Sigmoid colon (tissue), 7 donors: ENCODE measurements at regions of chr16 and their contacts with region 1.

Region 1: DNA sequence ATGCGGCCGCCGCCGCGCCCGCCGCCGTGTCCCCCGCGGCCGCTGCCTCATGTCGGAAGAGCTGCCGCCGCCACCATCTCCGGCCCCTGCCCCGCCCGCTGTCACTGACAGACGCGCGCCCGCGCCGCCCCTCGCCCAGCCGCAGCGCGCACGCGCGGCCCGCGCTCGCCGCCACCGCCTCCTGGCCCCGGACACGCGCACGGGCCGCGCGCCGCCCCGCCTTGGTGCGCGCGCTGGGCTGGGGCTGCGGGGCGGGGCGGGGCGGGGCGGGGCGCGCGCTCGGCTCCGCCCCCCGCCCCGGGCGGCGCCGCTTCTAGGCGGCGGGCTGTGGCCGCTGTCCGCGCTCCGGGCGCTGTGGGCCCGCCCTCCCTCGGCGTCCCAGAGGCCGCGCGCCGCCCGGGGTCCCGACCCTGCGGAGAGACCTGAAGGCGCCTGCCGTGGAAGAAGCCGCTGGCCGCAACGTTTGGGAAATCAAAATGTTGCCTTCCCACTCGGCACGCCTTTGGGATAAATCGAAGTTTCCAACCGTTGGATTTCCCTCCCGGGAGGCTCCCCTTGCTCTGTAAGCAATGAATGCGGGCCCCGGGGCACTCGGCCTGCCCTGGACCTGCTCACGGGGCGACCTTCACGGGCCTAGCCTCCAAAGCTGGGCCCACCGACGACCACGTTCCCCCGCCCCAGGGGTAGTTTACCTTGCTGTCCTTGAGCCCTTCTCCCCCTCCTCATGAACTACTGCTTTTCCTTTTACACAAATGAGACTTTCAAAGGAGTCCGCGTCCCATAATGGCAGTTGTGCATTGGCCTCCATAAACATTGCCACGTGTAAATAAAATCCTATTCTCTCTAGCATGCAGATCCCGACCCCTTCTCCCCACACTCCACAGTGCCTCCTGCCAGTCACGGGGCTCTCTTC is at the start of gene ADCY9:
- DNase-seq: peak; percentile 85
- H3K4me3 ChIP-seq: peak within 1 kb of the TSS; percentile 53 to 75 (median 63)
- H3K27ac ChIP-seq: peak within 1 kb of the TSS; percentile 78 to 88 (median 84)
- H3K4me1 ChIP-seq: peaks cover 0 to 43% (median 40%) of the 10 kb centered on the region in 4 donors
- H3K27me3 ChIP-seq: no peaks in the 10 kb centered on the region
- CTCF ChIP-seq: no peak
- EP300 ChIP-seq: no peak
- POLR2A ChIP-seq: no peak
- total RNA-seq, gene ADCY9: 12.5 to 28.0 (median 13.8) TPM

Region 2: GRCh38 chr16:3690470-3690928 is 426.1 kb before region 1 on chr16:
- intact Hi-C with region 1: loop called (anchors 5 kb)
- DNase-seq: peak; percentile 98
- H3K4me3 ChIP-seq: peak overlapping the region in 3 of 4 donors; percentile 35 to 44 (median 37)
- H3K27ac ChIP-seq: peak overlapping the region; percentile 57 to 77 (median 72)
- H3K4me1 ChIP-seq: peaks cover 0 to 17% (median 14%) of the 10 kb centered on the region in 4 donors
- H3K27me3 ChIP-seq: no peaks in the 10 kb centered on the region
- CTCF ChIP-seq: peak; percentile 88 to 95 (median 91)
- EP300 ChIP-seq: no peak
- POLR2A ChIP-seq: no peak

Region 3: GRCh38 chr16:3983081-3983520 is 133.5 kb before region 1 on chr16:
- intact Hi-C with region 1: loop called (anchors 2 kb)
- DNase-seq: peak; percentile 85
- H3K4me3 ChIP-seq: no peak overlapping the region
- H3K27ac ChIP-seq: no peak overlapping the region
- H3K4me1 ChIP-seq: peaks cover 0 to 21% (median 18%) of the 10 kb centered on the region in 4 donors
- H3K27me3 ChIP-seq: no peaks in the 10 kb centered on the region
- CTCF ChIP-seq: peak; percentile 53 to 73 (median 66)
- EP300 ChIP-seq: no peak
- POLR2A ChIP-seq: no peak

Region 4: GRCh38 chr16:4006397-4006999 is 110.1 kb before region 1 on chr16:
- intact Hi-C with region 1: loop called (anchors 5 kb)
- DNase-seq: no peak
- H3K4me3 ChIP-seq: peak overlapping the region in 3 of 4 donors; percentile 4 to 31 (median 28)
- H3K27ac ChIP-seq: peak overlapping the region in 3 of 4 donors; percentile 23 to 68 (median 67)
- H3K4me1 ChIP-seq: peaks cover 0 to 25% (median 16%) of the 10 kb centered on the region in 4 donors
- H3K27me3 ChIP-seq: no peaks in the 10 kb centered on the region
- CTCF ChIP-seq: no peak
- EP300 ChIP-seq: no peak
- POLR2A ChIP-seq: no peak

Region 5: DNA sequence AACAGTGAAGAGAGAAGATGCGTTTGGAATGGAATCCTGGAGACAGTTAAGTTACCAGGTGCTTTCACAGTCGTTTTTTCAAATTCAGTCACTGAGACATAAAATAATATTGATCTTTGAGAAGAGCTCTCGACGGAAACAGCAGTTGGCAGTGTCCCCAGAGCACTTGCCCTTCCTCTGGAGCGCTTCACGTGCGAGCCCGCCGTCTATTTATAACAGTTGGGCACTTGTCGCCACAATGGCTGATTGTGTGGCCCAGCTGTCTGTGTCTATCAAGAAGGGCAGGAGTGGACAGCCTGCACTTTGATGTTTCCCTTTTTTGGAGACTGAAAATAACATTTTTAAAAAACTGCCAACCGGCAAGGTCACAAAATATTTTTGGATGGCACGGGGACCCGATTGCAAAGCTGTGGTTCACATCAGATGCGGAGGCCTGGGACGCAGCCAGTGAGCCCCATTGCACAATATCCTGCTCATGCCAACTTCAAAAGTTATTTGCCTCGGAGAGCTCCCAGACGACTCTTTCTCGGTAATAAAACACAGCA is 63.2 kb before region 1 on chr16:
- intact Hi-C with region 1: loop called (anchors 5 kb)
- DNase-seq: peak; percentile 85
- H3K4me3 ChIP-seq: peak overlapping the region; percentile 2 to 23 (median 20)
- H3K27ac ChIP-seq: peak overlapping the region; percentile 56 to 83 (median 73)
- H3K4me1 ChIP-seq: peaks cover 0 to 27% (median 22%) of the 10 kb centered on the region in 4 donors
- H3K27me3 ChIP-seq: no peaks in the 10 kb centered on the region
- CTCF ChIP-seq: no peak
- EP300 ChIP-seq: peak in 1 of 4 donors; percentile 37
- POLR2A ChIP-seq: no peak

Region 6: GRCh38 chr16:4183237-4184036 is 66.8 kb after region 1 on chr16:
- intact Hi-C with region 1: loop called (anchors 1 kb)
- DNase-seq: peak; percentile 95
- H3K4me3 ChIP-seq: peak overlapping the region; percentile 59 to 80 (median 62)
- H3K27ac ChIP-seq: peak overlapping the region; percentile 93 to 99 (median 94)
- H3K4me1 ChIP-seq: peaks cover 0 to 8% (median 7%) of the 10 kb centered on the region in 4 donors
- H3K27me3 ChIP-seq: no peaks in the 10 kb centered on the region
- CTCF ChIP-seq: no peak
- EP300 ChIP-seq: peak in 1 of 4 donors; percentile 38
- POLR2A ChIP-seq: no peak

Region 7: GRCh38 chr16:4253394-4254150 is 137.0 kb after region 1 on chr16:
- intact Hi-C with region 1: loop called (anchors 2 kb)
- DNase-seq: peak; percentile 100
- H3K4me3 ChIP-seq: peak overlapping the region; percentile 47 to 67 (median 52)
- H3K27ac ChIP-seq: peak overlapping the region; percentile 86 to 97 (median 90)
- H3K4me1 ChIP-seq: peaks cover 0 to 10% (median 3%) of the 10 kb centered on the region in 4 donors
- H3K27me3 ChIP-seq: no peaks in the 10 kb centered on the region
- CTCF ChIP-seq: no peak
- EP300 ChIP-seq: peak in 1 of 4 donors; percentile 18
- POLR2A ChIP-seq: peak; percentile 49 to 61